ENCODE measurements at regions of chr18 and their contacts with region 1.

Region 1: DNA sequence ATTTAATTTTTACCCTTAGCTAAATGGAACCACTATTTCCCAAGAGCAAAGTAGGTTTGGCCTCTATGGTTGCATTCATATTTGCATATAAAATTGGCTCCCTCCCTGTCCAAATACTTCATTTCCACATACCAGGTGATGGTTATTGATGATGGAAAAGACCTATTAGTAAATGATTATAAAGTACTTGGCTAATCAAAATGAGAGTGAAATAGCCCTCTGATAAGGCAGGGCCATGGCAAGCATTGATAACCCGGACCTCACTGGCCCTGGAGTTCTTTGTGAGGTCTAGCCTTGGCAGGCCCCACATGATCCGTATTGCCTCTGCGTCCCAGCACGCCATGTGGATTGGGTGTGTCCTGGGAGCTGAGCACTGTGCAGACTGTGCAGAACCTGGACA is 201.1 kb upstream of the GATA6 start:
- DNase-seq: no peak
- H3K4me3 ChIP-seq: no peak overlapping the region
- H3K4me3 Mint-ChIP-seq: no peak overlapping the region
- H3K27ac ChIP-seq: no peak overlapping the region
- H3K27ac Mint-ChIP-seq: no peak overlapping the region
- H3K4me1 ChIP-seq: no peaks in the 10 kb centered on the region
- H3K4me1 Mint-ChIP-seq: no peaks in the 10 kb centered on the region
- H3K27me3 ChIP-seq: no peaks in the 10 kb centered on the region
- H3K27me3 Mint-ChIP-seq: peaks cover 0 to 5% of the 10 kb centered on the region in 2 donors

Region 2: GRCh38 chr18:21955757-21956652 is 12.3 kb before region 1 on chr18:
- CTCF ChIA-PET with region 1: interaction called, 19 read pairs
- POLR2A ChIA-PET with region 1: no interaction called
- intact Hi-C with region 1: no loop called
- DNase-seq: peak; percentile 61 to 67 (median 65)
- H3K4me3 ChIP-seq: no peak overlapping the region
- H3K4me3 Mint-ChIP-seq: no peak overlapping the region
- H3K27ac ChIP-seq: no peak overlapping the region
- H3K27ac Mint-ChIP-seq: no peak overlapping the region
- H3K4me1 ChIP-seq: no peaks in the 10 kb centered on the region
- H3K4me1 Mint-ChIP-seq: no peaks in the 10 kb centered on the region
- H3K27me3 ChIP-seq: no peaks in the 10 kb centered on the region
- H3K27me3 Mint-ChIP-seq: peaks cover 12 to 26% of the 10 kb centered on the region in 2 donors

Region 3: DNA sequence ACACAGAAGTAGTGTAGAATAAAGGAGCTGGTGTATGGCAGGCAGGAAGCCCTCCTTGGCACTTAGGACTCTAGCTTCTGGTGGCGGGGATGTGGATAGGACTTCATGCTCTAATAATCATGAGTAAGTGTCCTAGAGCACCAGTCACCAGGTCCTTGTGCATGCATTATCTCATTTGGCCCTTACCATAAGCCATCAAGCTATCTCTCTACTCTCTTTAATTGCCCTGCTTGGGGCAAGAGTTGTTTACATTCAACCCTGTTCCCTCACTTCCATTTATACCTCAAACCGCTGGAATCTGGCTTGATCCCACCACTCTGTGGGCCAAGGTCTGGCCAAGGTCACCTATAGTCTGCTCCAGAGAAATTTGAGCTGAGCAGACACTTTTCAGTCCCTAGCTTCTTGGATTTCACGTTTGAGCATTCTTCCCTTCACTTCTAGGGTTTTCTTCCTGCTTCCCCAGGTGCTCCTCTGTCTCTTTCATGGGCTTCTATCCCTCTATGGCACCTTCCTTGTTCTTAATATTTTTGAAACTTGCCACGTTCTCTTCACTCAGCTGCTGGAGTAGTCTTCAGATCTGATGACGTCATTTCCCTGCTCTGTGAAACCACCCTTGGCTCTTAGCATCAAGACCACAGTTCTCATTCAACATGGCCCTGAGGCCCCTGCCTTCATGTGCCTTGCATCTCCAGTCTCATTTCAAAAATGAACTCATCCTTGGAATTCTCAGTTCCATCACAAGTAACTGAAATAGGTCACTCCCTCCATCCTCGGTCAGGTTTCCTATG is 106.1 kb after region 1 on chr18:
- CTCF ChIA-PET with region 1: no interaction called
- POLR2A ChIA-PET with region 1: no interaction called
- intact Hi-C with region 1: no loop called
- DNase-seq: no peak
- H3K4me3 ChIP-seq: no peak overlapping the region
- H3K4me3 Mint-ChIP-seq: no peak overlapping the region
- H3K27ac ChIP-seq: no peak overlapping the region
- H3K27ac Mint-ChIP-seq: no peak overlapping the region
- H3K4me1 ChIP-seq: no peaks in the 10 kb centered on the region
- H3K4me1 Mint-ChIP-seq: peaks cover 0 to 2% (median 0%) of the 10 kb centered on the region in 4 donors
- H3K27me3 ChIP-seq: no peaks in the 10 kb centered on the region
- H3K27me3 Mint-ChIP-seq: no peaks in the 10 kb centered on the region

Region 4: DNA sequence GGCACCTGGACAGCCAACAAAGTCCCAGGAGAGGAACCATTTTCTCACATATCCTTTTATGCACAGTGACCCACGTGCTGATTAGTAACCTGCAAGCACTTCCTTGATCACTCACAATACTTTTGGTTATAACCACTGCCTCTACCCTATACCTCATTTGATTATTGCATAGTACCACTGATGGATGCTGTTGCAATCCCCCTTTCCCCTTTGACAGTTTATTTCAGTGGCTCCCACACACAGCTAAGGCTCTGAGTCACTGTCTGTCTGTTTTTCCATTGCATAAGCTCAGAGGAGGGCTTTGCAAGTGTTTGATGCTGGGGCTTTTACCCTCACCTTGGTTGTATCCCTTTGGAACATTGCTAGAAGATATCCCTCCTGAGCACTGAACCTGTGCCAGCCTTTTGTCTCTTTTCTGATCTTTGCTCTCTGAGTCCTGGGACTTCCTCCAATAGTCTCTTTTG is 863.1 kb after region 1 on chr18:
- CTCF ChIA-PET with region 1: no interaction called
- POLR2A ChIA-PET with region 1: no interaction called
- intact Hi-C with region 1: no loop called
- DNase-seq: no peak
- H3K4me3 ChIP-seq: no peak overlapping the region
- H3K4me3 Mint-ChIP-seq: no peak overlapping the region
- H3K27ac ChIP-seq: no peak overlapping the region
- H3K27ac Mint-ChIP-seq: no peak overlapping the region
- H3K4me1 ChIP-seq: no peaks in the 10 kb centered on the region
- H3K4me1 Mint-ChIP-seq: no peaks in the 10 kb centered on the region
- H3K27me3 ChIP-seq: peaks cover 5% of the 10 kb centered on the region
- H3K27me3 Mint-ChIP-seq: peaks cover 9 to 25% of the 10 kb centered on the region in 2 donors